ENCODE measurements at regions of chr2 and their contacts with region 1.

Region 1: GRCh38 chr2:88903749-88904353 is 212.4 kb downstream of the RPIA start:
- DNase-seq: peak; percentile 50 to 62
- H3K4me3 ChIP-seq: no peak overlapping the region
- H3K4me3 Mint-ChIP-seq: no peak overlapping the region
- H3K27ac Mint-ChIP-seq: no peak overlapping the region
- H3K4me1 ChIP-seq: no peaks in the 10 kb centered on the region
- H3K4me1 Mint-ChIP-seq: no peaks in the 10 kb centered on the region
- H3K27me3 ChIP-seq: no peaks in the 10 kb centered on the region
- H3K27me3 Mint-ChIP-seq: peaks cover 6% of the 10 kb centered on the region
- CTCF ChIP-seq: peak; percentile 76 to 86

Region 2: GRCh38 chr2:88739985-88740600 is 163.8 kb before region 1 on chr2:
- CTCF ChIA-PET with region 1: no interaction called
- POLR2A ChIA-PET with region 1: no interaction called
- intact Hi-C with region 1: no loop called
- DNase-seq: peak; percentile 75 to 83
- H3K4me3 ChIP-seq: no peak overlapping the region
- H3K4me3 Mint-ChIP-seq: no peak overlapping the region
- H3K27ac Mint-ChIP-seq: no peak overlapping the region
- H3K4me1 ChIP-seq: no peaks in the 10 kb centered on the region
- H3K4me1 Mint-ChIP-seq: no peaks in the 10 kb centered on the region
- H3K27me3 ChIP-seq: no peaks in the 10 kb centered on the region
- H3K27me3 Mint-ChIP-seq: no peaks in the 10 kb centered on the region
- CTCF ChIP-seq: peak; percentile 88 to 92

Region 3: DNA sequence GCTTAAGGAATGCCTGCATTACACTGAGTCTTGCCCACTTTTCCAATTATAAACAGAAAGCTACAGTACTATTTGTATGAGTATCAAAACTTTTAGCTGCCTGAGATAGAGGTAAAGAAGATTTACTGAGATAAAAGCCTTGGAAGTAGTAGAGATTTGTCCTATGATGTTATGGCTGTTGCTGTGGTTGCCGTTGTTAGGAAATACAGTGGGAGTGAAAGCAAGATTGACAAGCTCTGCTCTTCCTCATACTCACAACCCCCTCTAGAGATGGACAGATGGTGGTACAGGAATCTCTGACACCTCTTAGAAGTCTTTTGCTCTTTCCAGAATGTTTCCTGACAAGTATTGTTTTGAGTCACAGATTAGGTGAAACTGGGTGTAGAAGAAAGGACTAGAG is 30.1 kb after region 1 on chr2:
- CTCF ChIA-PET with region 1: interaction called, 5 read pairs
- POLR2A ChIA-PET with region 1: no interaction called
- intact Hi-C with region 1: loop called (anchors 5 kb)
- DNase-seq: peak in 1 of 2 experiments; percentile 43
- H3K4me3 ChIP-seq: no peak overlapping the region
- H3K4me3 Mint-ChIP-seq: no peak overlapping the region
- H3K27ac Mint-ChIP-seq: no peak overlapping the region
- H3K4me1 ChIP-seq: no peaks in the 10 kb centered on the region
- H3K4me1 Mint-ChIP-seq: no peaks in the 10 kb centered on the region
- H3K27me3 ChIP-seq: no peaks in the 10 kb centered on the region
- H3K27me3 Mint-ChIP-seq: peaks cover 7% of the 10 kb centered on the region
- CTCF ChIP-seq: peak; percentile 26 to 36

Region 4: GRCh38 chr2:88967844-88968243 is 64.0 kb after region 1 on chr2:
- CTCF ChIA-PET with region 1: no interaction called
- POLR2A ChIA-PET with region 1: no interaction called
- intact Hi-C with region 1: loop called (anchors 2 kb)
- DNase-seq: peak in 1 of 2 experiments; percentile 21
- H3K4me3 ChIP-seq: no peak overlapping the region
- H3K4me3 Mint-ChIP-seq: no peak overlapping the region
- H3K27ac Mint-ChIP-seq: no peak overlapping the region
- H3K4me1 ChIP-seq: no peaks in the 10 kb centered on the region
- H3K4me1 Mint-ChIP-seq: no peaks in the 10 kb centered on the region
- H3K27me3 ChIP-seq: no peaks in the 10 kb centered on the region; the same call in 1 of the 2 replicates
- H3K27me3 Mint-ChIP-seq: peaks cover 4% of the 10 kb centered on the region
- CTCF ChIP-seq: peak; percentile 39 to 49

Measured in Caco-2 (cell line).